ENCODE measurements at regions of chr7 and their contacts with region 1.

Region 1: GRCh38 chr7:75738987-75739795 is 450 bp upstream of the HIP1 start:
- DNase-seq: peak; percentile 100
- ATAC-seq: peak; percentile 97 to 99 (median 98)
- H3K4me3 ChIP-seq: peak overlapping the region; percentile 73 to 100 (median 95)
- H3K27ac ChIP-seq: peak overlapping the region; percentile 70 to 95 (median 88)
- H3K4me1 ChIP-seq: peaks cover 2 to 40% (median 26%) of the 10 kb centered on the region in 9 donors
- H3K27me3 ChIP-seq: no peaks in the 10 kb centered on the region
- CTCF ChIP-seq: peak in 6 of 9 donors; percentile 6 to 40 (median 24)

Region 2: GRCh38 chr7:75575488-75576121 is 163.6 kb before region 1 on chr7:
- intact Hi-C with region 1: no loop called
- DNase-seq: no peak
- ATAC-seq: no peak
- H3K4me3 ChIP-seq: no peak overlapping the region
- H3K27ac ChIP-seq: no peak overlapping the region
- H3K4me1 ChIP-seq: no peaks in the 10 kb centered on the region
- H3K27me3 ChIP-seq: no peaks in the 10 kb centered on the region
- CTCF ChIP-seq: no peak

Region 3: DNA sequence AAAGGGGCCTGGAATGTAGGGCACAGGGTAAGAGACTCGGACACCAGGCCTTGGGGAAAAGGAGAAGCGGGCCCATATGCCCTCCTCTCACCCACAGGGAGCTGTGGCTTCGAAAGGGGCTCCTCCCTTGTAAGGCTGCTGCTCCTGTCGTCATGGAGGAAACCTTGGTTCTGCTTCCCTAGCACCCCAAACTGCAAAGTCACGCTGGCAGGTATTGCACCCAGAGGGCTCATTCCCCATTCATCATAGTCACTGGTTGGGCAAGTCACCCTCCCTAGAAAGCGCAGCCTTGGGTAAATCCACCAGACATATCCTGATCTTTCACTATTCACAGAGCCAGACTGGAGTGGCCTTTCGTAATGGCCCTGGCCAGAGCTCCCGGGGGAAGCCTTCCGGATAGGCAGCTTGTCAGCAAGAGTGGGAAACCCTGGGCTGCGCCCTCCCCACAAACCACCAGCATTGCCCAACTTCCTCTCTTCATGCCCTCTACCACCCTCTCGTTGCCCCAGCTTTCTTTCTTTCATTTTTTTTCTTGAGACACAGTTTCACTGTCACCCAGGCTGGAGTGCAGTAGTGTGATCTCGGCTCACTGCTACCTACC is 121.5 kb before region 1 on chr7:
- intact Hi-C with region 1: loop called in 1 of 10 experiments (anchors 10 kb)
- DNase-seq: peak; percentile 48 to 63
- ATAC-seq: peak; percentile 55 to 83 (median 76)
- H3K4me3 ChIP-seq: peak overlapping the region in 1 of 10 donors; percentile 8
- H3K27ac ChIP-seq: peak overlapping the region in 5 of 10 donors; percentile 18 to 91 (median 62)
- H3K4me1 ChIP-seq: peaks cover 0 to 72% (median 0%) of the 10 kb centered on the region in 9 donors
- H3K27me3 ChIP-seq: no peaks in the 10 kb centered on the region
- CTCF ChIP-seq: no peak

Region 4: DNA sequence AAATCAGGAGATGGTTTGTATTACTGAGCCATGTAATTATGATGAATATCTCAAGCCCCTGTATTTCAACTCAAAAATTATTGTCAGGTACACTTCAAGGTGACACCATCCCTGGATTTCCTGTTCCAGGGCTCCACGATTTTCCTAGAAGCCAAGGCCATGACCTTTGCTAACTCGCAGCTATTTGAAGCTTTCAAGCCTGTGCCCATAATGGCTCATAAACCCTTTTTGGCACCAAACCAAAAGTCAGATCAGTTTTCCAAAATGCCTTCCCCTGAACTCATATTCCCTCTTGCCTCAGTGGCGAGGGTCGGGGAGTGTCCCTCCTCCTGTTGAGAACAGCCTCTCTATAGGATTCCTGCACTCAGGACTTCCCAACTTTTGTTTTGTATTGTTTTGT is 71.3 kb before region 1 on chr7:
- intact Hi-C with region 1: loop called in 1 of 10 experiments (anchors 5 kb)
- DNase-seq: no peak
- ATAC-seq: no peak
- H3K4me3 ChIP-seq: no peak overlapping the region
- H3K27ac ChIP-seq: no peak overlapping the region
- H3K4me1 ChIP-seq: peaks cover 0 to 17% (median 11%) of the 10 kb centered on the region in 9 donors
- H3K27me3 ChIP-seq: no peaks in the 10 kb centered on the region
- CTCF ChIP-seq: no peak

Measured in heart right ventricle (tissue), 16 donors.